ENCODE measurements at regions of chr18 and their contacts with region 1.

Region 1: GRCh38 chr18:10140461-10141282 is 226.9 kb downstream of the VAPA start:
- DNase-seq: no peak
- H3K4me3 ChIP-seq: no peak overlapping the region
- H3K27ac ChIP-seq: no peak overlapping the region
- H3K4me1 ChIP-seq: no peaks in the 10 kb centered on the region
- H3K27me3 ChIP-seq: no peaks in the 10 kb centered on the region
- CTCF ChIP-seq: no peak
- POLR2A ChIP-seq: no peak

Region 2: DNA sequence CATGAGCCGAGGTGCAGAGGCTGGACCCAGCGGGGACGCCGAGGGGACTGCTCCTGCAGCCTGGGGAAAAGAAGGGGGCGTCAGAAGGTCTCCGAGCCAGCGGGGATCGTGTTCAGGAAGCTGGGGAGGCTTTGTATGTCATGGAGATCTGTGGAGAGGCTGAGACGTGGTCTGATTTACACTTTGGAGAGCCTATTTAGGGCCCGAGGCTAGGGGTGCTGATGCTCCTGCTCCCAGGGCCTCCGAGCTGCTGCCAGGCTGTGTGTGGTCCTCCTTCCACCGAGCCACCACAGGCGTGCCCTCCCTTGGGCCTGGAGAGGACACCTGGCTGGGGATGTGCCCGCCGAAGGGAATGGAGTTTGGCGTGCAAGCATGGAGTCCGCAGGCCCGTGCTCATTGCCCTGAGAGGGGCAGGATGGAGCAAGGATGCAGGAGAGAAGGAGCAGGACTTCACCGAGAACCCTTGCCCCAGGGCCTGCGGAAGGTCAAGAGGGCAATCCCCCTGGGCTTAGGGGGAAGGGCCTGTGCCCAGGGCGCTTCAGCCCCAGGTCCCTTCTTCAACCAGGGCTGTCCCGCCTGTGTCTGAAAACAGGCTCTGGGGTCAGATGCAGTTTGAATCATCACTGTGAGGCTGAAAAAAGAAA is 25.6 kb after region 1 on chr18:
- intact Hi-C with region 1: loop called (anchors 2 kb)
- DNase-seq: no peak
- H3K4me3 ChIP-seq: no peak overlapping the region
- H3K27ac ChIP-seq: no peak overlapping the region
- H3K4me1 ChIP-seq: no peaks in the 10 kb centered on the region
- H3K27me3 ChIP-seq: no peaks in the 10 kb centered on the region
- CTCF ChIP-seq: no peak
- POLR2A ChIP-seq: no peak